ENCODE measurements at regions of chr3 and their contacts with region 1.

Region 1: GRCh38 chr3:64030741-64031140 is 7.4 kb upstream of the PSMD6 start:
- DNase-seq: peak; percentile 67 to 85 (median 81)
- H3K4me3 ChIP-seq: no peak overlapping the region
- H3K27ac ChIP-seq: no peak overlapping the region
- H3K4me1 ChIP-seq: no peaks in the 10 kb centered on the region
- H3K27me3 ChIP-seq: no peaks in the 10 kb centered on the region
- CTCF ChIP-seq: peak; percentile 70 to 92 (median 91)
- EP300 ChIP-seq: no peak
- POLR2A ChIP-seq: peak; percentile 18

Region 2: DNA sequence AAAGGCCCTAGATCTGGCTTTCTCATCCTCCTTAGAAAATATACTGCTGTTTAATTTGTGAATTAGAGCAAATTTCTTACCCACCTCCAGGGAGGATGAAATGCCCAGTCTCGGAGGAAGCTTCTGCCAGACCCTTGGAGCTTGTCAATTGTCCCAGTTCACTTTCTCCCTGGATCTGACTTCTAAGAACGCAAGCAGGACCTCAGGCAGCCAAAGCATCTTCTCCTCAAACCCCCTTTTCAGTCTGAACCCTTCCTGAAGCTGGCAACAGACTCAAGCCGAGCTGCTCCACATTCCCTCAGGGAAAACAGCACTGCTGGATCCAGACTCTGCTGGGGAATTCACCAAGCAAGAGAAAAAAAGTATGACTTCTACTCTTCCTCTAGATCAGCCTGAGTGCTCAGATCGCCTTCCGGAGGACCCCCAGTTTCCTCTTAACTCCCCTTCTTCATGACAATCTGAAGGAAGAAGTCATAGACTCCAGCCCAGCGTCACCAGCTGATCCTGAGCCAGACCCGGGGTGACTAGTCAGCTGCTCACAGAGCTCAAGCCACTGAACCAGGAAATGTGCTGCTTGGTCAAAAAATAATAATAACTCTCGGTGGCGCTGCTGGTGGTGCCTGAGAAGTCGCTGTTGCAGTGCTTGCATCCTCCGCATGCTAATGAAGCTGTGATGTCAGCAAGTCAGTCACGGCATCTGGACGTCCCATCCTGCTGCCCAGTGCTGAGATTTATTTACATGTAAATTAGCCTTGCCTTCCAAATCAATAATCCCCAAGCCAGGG is 194.3 kb after region 1 on chr3 and contains the start of gene PRICKLE2:
- intact Hi-C with region 1: loop called in 1 of 4 experiments (anchors 5 kb)
- DNase-seq: peak; percentile 80 to 85 (median 82)
- H3K4me3 ChIP-seq: peak within 1 kb of the TSS; percentile 24
- H3K27ac ChIP-seq: peak within 1 kb of the TSS; percentile 55 to 84
- H3K4me1 ChIP-seq: peaks cover 14% of the 10 kb centered on the region
- H3K27me3 ChIP-seq: no peaks in the 10 kb centered on the region
- CTCF ChIP-seq: peak in 1 of 3 donors; percentile 41
- EP300 ChIP-seq: no peak
- POLR2A ChIP-seq: peak; percentile 24
- total RNA-seq, gene PRICKLE2: 22.2 to 34.8 (median 27.2) TPM

Region 3: DNA sequence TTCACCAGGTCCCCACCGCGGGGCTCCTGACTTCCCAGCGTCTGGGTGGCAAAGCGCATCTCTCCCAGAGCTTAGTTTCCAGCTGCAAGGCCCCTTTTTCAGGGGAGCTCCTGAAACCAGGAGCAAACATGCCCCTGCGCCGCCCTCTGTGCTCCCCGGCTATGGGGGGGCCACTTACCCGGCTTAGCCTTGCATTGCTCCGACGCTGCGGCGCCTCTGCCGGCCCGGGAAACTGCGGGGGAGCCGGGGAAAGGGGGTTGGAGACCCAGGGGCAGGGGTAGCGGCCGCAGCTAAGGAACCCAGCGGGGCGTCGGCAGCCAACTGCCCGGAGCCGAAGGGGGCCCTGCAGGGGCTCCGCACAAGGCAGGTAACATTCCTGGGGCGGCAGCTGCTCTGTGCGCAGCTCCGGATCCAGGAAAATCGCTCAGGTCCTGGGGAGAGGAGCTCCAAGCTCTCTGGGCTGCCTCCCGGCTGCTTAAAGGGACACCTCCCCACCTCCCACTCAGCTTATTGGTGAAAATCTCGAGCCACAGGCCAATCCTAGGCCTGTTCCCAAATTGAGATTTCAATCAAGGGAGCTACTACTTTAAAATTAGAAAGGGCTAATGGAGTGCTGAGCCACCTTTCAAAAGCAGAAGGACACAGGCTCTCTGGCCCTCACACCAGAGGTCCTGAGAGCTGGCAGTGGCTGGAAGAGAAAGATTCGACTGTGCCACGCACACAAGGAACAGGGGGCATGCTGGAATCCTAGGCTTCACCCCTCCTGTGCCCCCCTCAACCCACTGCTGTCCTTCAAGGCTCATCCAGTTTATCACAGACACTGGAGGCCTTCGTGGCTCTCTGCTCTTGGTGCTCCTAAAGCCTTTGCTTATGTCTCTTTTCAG is 237.2 kb after region 1 on chr3:
- intact Hi-C with region 1: loop called in 1 of 4 experiments (anchors 10 kb)
- DNase-seq: peak; percentile 54 to 70 (median 64)
- H3K4me3 ChIP-seq: peak overlapping the region; percentile 65
- H3K27ac ChIP-seq: peak overlapping the region; percentile 79 to 83
- H3K4me1 ChIP-seq: peaks cover 20% of the 10 kb centered on the region
- H3K27me3 ChIP-seq: no peaks in the 10 kb centered on the region
- CTCF ChIP-seq: no peak
- EP300 ChIP-seq: no peak
- POLR2A ChIP-seq: peak; percentile 49

Region 4: GRCh38 chr3:64399205-64399800 is 368.6 kb after region 1 on chr3:
- intact Hi-C with region 1: loop called (anchors 1 to 10 kb)
- DNase-seq: peak in 2 of 5 donors; percentile 25 to 31
- H3K4me3 ChIP-seq: no peak overlapping the region
- H3K27ac ChIP-seq: no peak overlapping the region
- H3K4me1 ChIP-seq: no peaks in the 10 kb centered on the region
- H3K27me3 ChIP-seq: no peaks in the 10 kb centered on the region
- CTCF ChIP-seq: peak; percentile 36 to 56 (median 53)
- EP300 ChIP-seq: no peak
- POLR2A ChIP-seq: no peak

Region 5: GRCh38 chr3:64405211-64405835 is 374.6 kb after region 1 on chr3:
- intact Hi-C with region 1: loop called in 2 of 4 experiments (anchors 5 to 10 kb)
- DNase-seq: no peak
- H3K4me3 ChIP-seq: no peak overlapping the region
- H3K27ac ChIP-seq: no peak overlapping the region
- H3K4me1 ChIP-seq: peaks cover 1% of the 10 kb centered on the region
- H3K27me3 ChIP-seq: no peaks in the 10 kb centered on the region
- CTCF ChIP-seq: no peak
- EP300 ChIP-seq: no peak
- POLR2A ChIP-seq: no peak

Region 6: DNA sequence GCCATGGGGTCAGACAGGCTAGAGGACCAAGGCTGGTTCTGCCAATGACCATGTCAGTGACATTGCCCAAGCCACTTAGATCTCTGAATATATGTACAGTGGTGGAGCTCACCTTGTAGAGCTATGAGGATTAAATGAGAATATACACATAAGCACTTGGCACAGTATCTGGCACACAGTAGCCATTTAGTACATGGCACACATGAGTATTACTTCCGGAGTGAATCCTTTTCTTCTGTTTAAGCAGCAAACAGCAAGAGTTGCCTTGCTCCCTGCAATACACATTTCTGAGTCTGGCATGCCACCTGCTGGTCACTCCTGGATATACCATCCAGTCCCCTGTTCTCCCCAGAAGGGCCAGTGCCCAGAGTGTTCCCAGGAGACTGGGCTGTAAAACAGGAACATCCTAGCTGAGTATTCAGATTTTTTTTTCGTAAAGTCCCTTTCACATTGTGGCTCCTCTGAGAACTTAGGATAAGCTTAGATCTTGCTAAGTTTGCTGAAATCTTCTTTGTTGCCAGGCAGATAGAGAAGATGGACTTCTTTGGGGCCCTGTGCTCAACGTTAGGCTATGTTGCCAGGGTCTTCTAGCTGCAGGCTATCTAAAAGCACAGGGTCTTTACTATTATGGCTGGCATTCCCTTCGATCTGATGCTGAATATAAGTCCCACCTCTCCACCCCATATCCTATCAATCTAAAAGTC is 453.7 kb after region 1 on chr3:
- intact Hi-C with region 1: loop called (anchors 2 to 5 kb)
- DNase-seq: peak; percentile 75 to 88 (median 87)
- H3K4me3 ChIP-seq: no peak overlapping the region
- H3K27ac ChIP-seq: no peak overlapping the region
- H3K4me1 ChIP-seq: peaks cover 5% of the 10 kb centered on the region
- H3K27me3 ChIP-seq: no peaks in the 10 kb centered on the region
- CTCF ChIP-seq: peak; percentile 79 to 89 (median 85)
- EP300 ChIP-seq: no peak
- POLR2A ChIP-seq: no peak

Region 7: DNA sequence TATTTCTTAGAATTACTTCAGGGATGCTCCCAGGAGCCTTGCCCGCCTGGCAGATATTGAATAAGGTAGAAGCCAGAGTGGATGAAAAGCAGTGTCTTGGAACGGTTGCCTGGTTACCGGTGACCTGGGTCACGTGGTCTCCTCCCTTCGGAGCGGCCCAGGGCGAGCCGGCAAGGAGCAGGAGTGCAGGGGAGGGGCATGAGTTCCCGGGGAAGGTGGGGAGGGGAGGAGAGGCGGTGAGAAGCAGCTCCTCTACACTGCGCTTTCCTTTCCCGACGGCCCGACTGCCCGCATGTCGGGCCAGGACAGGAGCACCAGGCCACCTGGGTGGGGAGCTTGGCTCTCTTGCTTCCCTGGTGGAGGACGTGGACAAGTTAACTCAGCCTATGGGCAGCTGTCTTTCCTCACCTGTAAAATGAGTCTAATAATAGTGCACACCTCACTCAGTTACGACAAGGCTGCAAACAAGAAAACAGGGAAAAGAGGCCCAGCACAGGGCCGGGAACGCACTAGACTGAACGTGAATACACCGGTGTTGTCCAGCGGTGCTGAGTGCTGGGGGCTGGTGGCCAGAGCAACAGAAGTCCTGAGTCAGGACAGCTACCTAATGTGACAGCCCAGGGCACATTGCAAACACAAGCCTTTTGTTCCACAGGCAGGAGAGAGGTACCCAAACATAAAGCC is 458.8 kb after region 1 on chr3:
- intact Hi-C with region 1: loop called (anchors 2 to 5 kb)
- DNase-seq: peak; percentile 62 to 74 (median 68)
- H3K4me3 ChIP-seq: no peak overlapping the region
- H3K27ac ChIP-seq: no peak overlapping the region
- H3K4me1 ChIP-seq: peaks cover 24% of the 10 kb centered on the region
- H3K27me3 ChIP-seq: no peaks in the 10 kb centered on the region
- CTCF ChIP-seq: no peak
- EP300 ChIP-seq: no peak
- POLR2A ChIP-seq: no peak